CD4-positive, alpha-beta memory T cell (primary cell): ENCODE measurements at regions of chr1 and their contacts with region 1.

Region 1: DNA sequence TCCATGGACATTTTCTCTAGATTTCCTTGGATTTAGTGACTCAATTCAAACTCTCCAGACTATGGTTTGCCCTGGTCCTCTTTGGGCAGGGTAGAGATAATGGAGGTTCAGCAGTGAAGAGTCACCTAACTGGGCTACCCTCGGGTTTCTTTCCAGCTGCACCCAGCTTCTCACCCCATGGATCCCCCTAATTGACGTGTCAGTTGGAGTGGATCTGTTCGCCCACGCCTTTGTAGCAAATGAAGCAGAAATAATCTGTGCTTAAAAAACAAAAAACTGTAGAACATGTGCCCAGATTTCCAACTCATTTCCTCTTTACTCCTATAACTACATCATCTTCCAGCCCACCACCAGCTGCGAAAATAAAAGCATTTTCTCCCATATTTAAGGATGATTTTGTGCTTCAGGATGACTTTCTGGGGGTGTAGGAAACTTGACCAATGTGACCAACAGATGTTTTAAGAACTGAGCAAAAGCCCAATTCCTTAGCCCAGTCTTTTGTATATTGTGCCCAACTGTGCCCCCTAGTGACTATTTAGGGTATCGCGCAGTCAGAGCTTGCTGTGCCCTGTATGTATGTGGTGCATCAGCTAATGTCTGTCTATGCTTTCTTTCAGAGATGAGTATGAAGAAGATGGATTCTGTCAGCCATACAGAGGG is 66.5 kb upstream of the UBE2U start:
- DNase-seq: peak; percentile 42 to 61 (median 47)
- H3K4me3 ChIP-seq: no peak overlapping the region
- H3K4me3 Mint-ChIP-seq: no peak overlapping the region
- H3K27ac ChIP-seq: no peak overlapping the region
- H3K27ac Mint-ChIP-seq: no peak overlapping the region
- H3K4me1 ChIP-seq: no peaks in the 10 kb centered on the region
- H3K4me1 Mint-ChIP-seq: no peaks in the 10 kb centered on the region
- H3K27me3 ChIP-seq: no peaks in the 10 kb centered on the region
- H3K27me3 Mint-ChIP-seq: peaks cover under 1 to 13% of the 10 kb centered on the region in 2 donors

Region 2: GRCh38 chr1:63615768-63616420 is 521.0 kb before region 1 on chr1:
- CTCF ChIA-PET with region 1: interaction called, 84 read pairs
- POLR2A ChIA-PET with region 1: no interaction called
- intact Hi-C with region 1: loop called (anchors 1 kb)
- DNase-seq: peak; percentile 49 to 76 (median 67)
- H3K4me3 ChIP-seq: no peak overlapping the region
- H3K4me3 Mint-ChIP-seq: no peak overlapping the region
- H3K27ac ChIP-seq: no peak overlapping the region
- H3K27ac Mint-ChIP-seq: peak overlapping the region in 1 of 7 donors; percentile 58
- H3K4me1 ChIP-seq: no peaks in the 10 kb centered on the region
- H3K4me1 Mint-ChIP-seq: peaks cover 0 to 10% (median 2%) of the 10 kb centered on the region in 4 donors
- H3K27me3 ChIP-seq: no peaks in the 10 kb centered on the region
- H3K27me3 Mint-ChIP-seq: no peaks in the 10 kb centered on the region

Region 3: GRCh38 chr1:63691701-63692425 is 445.0 kb before region 1 on chr1:
- CTCF ChIA-PET with region 1: interaction called, 16 read pairs
- POLR2A ChIA-PET with region 1: no interaction called
- intact Hi-C with region 1: no loop called
- DNase-seq: peak in 4 of 5 donors; percentile 10 to 17 (median 12)
- H3K4me3 ChIP-seq: no peak overlapping the region
- H3K4me3 Mint-ChIP-seq: no peak overlapping the region
- H3K27ac ChIP-seq: no peak overlapping the region
- H3K27ac Mint-ChIP-seq: no peak overlapping the region
- H3K4me1 ChIP-seq: no peaks in the 10 kb centered on the region
- H3K4me1 Mint-ChIP-seq: peaks cover 0 to 2% (median under 1%) of the 10 kb centered on the region in 4 donors
- H3K27me3 ChIP-seq: no peaks in the 10 kb centered on the region
- H3K27me3 Mint-ChIP-seq: no peaks in the 10 kb centered on the region

Region 4: DNA sequence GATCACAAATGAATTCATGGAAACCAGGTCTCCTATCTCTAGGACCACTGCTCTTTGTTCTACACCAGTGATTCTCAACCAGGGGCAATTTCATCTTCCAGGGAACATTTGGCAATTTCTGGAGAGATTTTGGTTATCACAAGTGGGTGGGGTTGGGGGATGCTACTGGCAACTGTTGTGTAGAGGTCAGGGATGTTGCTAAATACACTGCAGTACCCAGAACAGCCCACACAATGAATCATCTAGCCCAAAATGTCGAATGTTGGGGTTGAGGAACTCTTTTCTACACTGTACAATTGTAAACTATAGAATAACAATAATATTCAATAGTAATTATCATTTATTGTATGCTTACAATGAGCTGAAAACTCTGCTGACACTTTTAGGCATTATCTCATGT is 10.9 kb after region 1 on chr1:
- CTCF ChIA-PET with region 1: interaction called, 36 read pairs
- POLR2A ChIA-PET with region 1: no interaction called
- intact Hi-C with region 1: no loop called
- DNase-seq: no peak
- H3K4me3 ChIP-seq: no peak overlapping the region
- H3K4me3 Mint-ChIP-seq: no peak overlapping the region
- H3K27ac ChIP-seq: no peak overlapping the region
- H3K27ac Mint-ChIP-seq: no peak overlapping the region
- H3K4me1 ChIP-seq: no peaks in the 10 kb centered on the region
- H3K4me1 Mint-ChIP-seq: no peaks in the 10 kb centered on the region
- H3K27me3 ChIP-seq: no peaks in the 10 kb centered on the region
- H3K27me3 Mint-ChIP-seq: peaks cover 12 to 19% of the 10 kb centered on the region in 2 donors

Region 5: GRCh38 chr1:64242895-64243756 is 106.2 kb after region 1 on chr1:
- CTCF ChIA-PET with region 1: interaction called, 11 read pairs
- POLR2A ChIA-PET with region 1: no interaction called
- intact Hi-C with region 1: loop called (anchors 2 kb)
- DNase-seq: peak in 4 of 5 donors; percentile 12 to 34 (median 21)
- H3K4me3 ChIP-seq: no peak overlapping the region
- H3K4me3 Mint-ChIP-seq: peak overlapping the region; percentile 1 to 87 (median 63)
- H3K27ac ChIP-seq: no peak overlapping the region
- H3K27ac Mint-ChIP-seq: peak overlapping the region in 2 of 7 donors; percentile 19 to 31
- H3K4me1 ChIP-seq: peaks cover 22% of the 10 kb centered on the region
- H3K4me1 Mint-ChIP-seq: peaks cover 12 to 31% (median 15%) of the 10 kb centered on the region in 4 donors
- H3K27me3 ChIP-seq: no peaks in the 10 kb centered on the region
- H3K27me3 Mint-ChIP-seq: peaks cover 6 to 13% of the 10 kb centered on the region in 2 donors